K562 (cell line): ENCODE measurements at regions of chr1 and their contacts with region 1.

Region 1: GRCh38 chr1:231590453-231591198 is 36.0 kb upstream of the DISC1 start:
- DNase-seq: peak in 2 of 4 experiments; percentile 49 to 70
- ATAC-seq: peak; percentile 95
- H3K4me3 ChIP-seq: no peak overlapping the region
- H3K27ac ChIP-seq: no peak overlapping the region
- H3K4me1 ChIP-seq: no peaks in the 10 kb centered on the region; a peak in 1 of 5 replicates
- H3K27me3 ChIP-seq: no peaks in the 10 kb centered on the region
- CTCF ChIP-seq: peak; percentile 67 to 88 (median 81)
- EP300 ChIP-seq: no peak
- POLR2A ChIP-seq: no peak
- RAD21 ChIP-seq: peak; percentile 68 to 88

Region 2: DNA sequence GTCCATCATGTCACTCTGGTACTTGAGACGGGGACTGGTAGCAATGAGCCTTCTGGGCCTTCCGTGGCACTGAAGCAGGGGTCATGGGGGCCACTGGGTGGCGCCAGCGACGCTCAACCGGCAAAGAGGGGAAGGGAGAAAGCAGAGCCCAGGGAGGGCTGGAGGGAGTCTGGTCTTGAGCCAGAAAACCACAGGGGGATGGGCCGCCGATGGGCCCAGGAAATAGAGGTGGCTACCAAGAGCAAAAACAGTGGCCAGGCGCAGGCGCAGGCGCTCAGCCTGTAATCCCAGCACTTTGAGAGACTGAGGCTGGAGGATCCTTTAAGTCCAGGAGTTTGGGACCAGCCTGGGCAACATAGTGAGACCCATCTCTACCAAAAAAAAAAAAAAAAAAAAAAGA is 274.7 kb before region 1 on chr1:
- CTCF ChIA-PET with region 1: no interaction called
- POLR2A ChIA-PET with region 1: no interaction called
- in situ Hi-C with region 1: no loop called
- intact Hi-C with region 1: loop called (anchors 1 kb)
- DNase-seq: peak; percentile 54 to 81 (median 62)
- ATAC-seq: peak; percentile 97
- H3K4me3 ChIP-seq: no peak overlapping the region
- H3K27ac ChIP-seq: no peak overlapping the region
- H3K4me1 ChIP-seq: no peaks in the 10 kb centered on the region
- H3K27me3 ChIP-seq: peaks cover 4 to 7% of the 10 kb centered on the region in 2 experiments; a peak in 3 of 5 replicates
- CTCF ChIP-seq: peak; percentile 86 to 90 (median 89)
- EP300 ChIP-seq: no peak
- POLR2A ChIP-seq: no peak
- RAD21 ChIP-seq: peak; percentile 66 to 85